Activated B cell treated with CpG ODN at 0.5 μM for 24 hours (primary cell): ENCODE measurements at regions of chr12 and their contacts with region 1.

Region 1: DNA sequence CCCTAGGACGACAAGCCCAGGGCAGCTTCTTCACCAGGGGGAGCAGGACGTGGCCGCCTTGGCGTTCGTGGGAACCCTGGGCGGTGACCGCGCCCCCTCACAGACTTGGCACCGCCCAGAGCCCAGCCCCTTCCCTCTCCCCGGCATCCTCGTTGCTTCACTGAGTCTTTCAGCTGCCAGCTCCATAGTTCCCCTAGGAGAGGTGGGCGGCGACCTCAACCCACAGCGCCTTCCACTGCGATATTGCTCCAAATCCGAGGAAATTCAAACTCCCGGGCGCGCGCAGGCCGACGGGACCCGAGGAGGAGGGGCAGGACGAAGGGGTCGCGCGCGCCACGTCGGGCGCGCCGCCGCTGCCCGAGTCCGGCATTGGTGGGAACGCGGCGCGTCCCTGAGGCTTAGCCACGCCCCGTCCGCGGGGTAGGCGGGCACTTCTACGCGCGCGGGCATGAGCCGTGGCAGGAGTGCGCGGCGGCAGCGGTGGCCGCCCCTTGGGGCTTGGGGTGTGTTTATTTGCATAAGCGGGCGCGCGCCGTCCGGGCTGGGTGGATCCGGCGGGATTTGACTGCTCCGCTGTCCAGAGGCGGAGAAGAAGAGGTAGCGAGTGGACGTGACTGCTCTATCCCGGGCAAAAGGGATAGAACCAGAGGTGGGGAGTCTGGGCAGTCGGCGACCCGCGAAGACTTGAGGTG is at the starts of genes APAF1 and IKBIP:
- DNase-seq: peak; percentile 99
- ATAC-seq: peak; percentile 87
- H3K4me3 Mint-ChIP-seq: peak within 1 kb of the TSS; percentile 97
- H3K27ac Mint-ChIP-seq: peak within 1 kb of the TSS; percentile 95
- H3K4me1 Mint-ChIP-seq: peaks cover 19% of the 10 kb centered on the region
- H3K27me3 Mint-ChIP-seq: no peaks in the 10 kb centered on the region
- CTCF ChIP-seq: no peak
- total RNA-seq, gene APAF1: 21.7 and 24.0 TPM in 2 replicates
- total RNA-seq, gene IKBIP: 8.9 and 9.1 TPM in 2 replicates

Region 2: DNA sequence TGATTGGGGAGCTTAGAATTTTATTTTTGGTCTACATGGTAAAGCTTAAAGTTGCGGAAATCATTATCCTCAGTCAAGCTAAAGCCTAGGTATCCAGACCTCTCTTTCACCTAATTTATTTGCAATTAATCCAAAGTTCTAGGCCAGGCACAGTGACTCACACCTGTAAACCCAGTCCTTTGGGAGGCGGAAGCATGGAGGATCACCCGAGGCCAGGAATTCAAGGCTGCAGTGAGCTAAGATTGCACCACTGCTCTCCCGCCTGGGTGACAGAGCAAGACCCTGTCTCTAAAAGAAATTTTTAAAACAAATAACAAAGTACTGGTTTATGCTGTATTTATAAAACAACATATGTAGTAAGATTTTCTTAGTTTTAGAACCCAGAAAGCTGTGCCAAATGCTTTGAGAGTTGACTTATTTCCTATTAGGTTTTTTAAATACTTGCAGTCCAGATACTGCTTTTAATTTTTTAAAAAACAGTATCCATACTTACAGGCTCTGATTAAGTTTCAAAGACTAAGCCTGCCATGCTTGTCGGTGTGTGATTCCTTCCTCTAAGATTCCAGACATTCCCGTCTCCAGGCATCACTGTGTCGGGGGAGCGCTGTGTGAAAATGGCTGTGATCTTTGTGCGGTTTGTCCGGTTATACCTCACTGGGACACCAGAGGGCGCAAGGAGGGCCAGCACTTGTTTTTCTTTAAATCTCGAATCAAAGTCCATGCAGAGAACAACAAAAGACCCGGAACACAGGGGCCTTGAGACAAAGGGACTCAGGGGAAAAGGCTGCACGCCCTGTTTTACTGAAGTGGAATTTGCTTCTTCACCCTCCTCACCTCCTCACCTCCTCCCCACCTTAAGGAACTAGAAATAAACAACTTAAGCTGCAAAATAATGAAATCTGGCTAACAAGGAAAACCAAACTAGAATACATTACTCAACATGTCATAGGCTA is 154.1 kb before region 1 on chr12:
- CTCF ChIA-PET with region 1: interaction called, 3 read pairs
- POLR2A ChIA-PET with region 1: interaction called, 4 read pairs
- intact Hi-C with region 1: loop called (anchors 2 kb)
- DNase-seq: peak; percentile 72
- ATAC-seq: peak; percentile 98
- H3K4me3 Mint-ChIP-seq: peak overlapping the region; percentile 12
- H3K27ac Mint-ChIP-seq: peak overlapping the region; percentile 82
- H3K4me1 Mint-ChIP-seq: peaks cover 4% of the 10 kb centered on the region
- H3K27me3 Mint-ChIP-seq: peaks cover under 1% of the 10 kb centered on the region
- CTCF ChIP-seq: no peak

Region 3: GRCh38 chr12:98593351-98594049 is 51.4 kb before region 1 on chr12 and contains the start of gene SLC25A3:
- CTCF ChIA-PET with region 1: interaction called, 4 read pairs
- POLR2A ChIA-PET with region 1: interaction called, 100 read pairs
- intact Hi-C with region 1: loop called (anchors 1 kb)
- DNase-seq: peak; percentile 81
- ATAC-seq: peak; percentile 97
- H3K4me3 Mint-ChIP-seq: peak within 1 kb of the TSS; percentile 96
- H3K27ac Mint-ChIP-seq: peak within 1 kb of the TSS; percentile 96
- H3K4me1 Mint-ChIP-seq: peaks cover 36% of the 10 kb centered on the region
- H3K27me3 Mint-ChIP-seq: no peaks in the 10 kb centered on the region
- CTCF ChIP-seq: no peak
- total RNA-seq, gene SLC25A3: 508 and 518 TPM in 2 replicates

Region 4: DNA sequence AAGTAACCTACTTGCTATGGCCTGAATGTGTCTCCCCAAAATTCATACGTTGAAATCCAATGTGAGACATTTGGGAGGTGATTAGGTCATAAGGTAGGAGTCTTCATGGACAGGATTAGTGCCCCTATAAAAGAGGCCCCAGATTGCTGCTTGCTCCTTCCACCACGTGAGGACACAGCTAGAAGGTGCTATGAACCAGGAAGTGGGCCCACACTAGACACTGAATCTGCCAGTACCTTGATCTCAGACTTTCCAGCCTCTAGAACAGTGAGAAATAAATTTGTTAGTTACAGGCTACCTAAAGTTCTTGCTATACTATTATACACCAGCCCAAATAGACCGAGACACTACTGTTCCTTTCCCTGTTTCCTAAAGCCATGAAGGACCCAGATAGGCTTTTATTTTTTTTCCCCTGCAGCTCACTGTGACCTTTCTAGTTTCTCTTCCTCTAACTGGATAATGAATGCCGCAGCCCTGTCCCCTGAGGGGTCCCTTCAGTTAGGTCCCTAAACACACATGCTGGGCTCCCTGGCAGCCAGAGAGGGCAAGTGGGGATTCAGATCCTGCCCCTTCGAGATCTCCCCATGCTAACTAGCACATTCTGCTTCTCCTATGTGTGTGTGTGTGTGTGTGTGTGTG is 32.0 kb before region 1 on chr12:
- CTCF ChIA-PET with region 1: interaction called, 3 read pairs
- POLR2A ChIA-PET with region 1: interaction called, 18 read pairs
- intact Hi-C with region 1: loop called (anchors 1 kb)
- DNase-seq: peak; percentile 40
- ATAC-seq: peak; percentile 95
- H3K4me3 Mint-ChIP-seq: peak overlapping the region; percentile 59
- H3K27ac Mint-ChIP-seq: peak overlapping the region; percentile 96
- H3K4me1 Mint-ChIP-seq: peaks cover 19% of the 10 kb centered on the region
- H3K27me3 Mint-ChIP-seq: no peaks in the 10 kb centered on the region
- CTCF ChIP-seq: no peak